A549 (cell line): ENCODE measurements at regions of chr19 and their contacts with region 1.

Region 1: GRCh38 chr19:45692187-45693105 is at the start of gene QPCTL:
- DNase-seq: peak; percentile 99 to 100
- ATAC-seq: peak; percentile 91 to 96
- H3K4me3 ChIP-seq: peak within 1 kb of the TSS; percentile 82
- H3K27ac ChIP-seq: peak within 1 kb of the TSS; percentile 88 to 91
- H3K4me1 ChIP-seq: peaks cover 13% of the 10 kb centered on the region
- CTCF ChIP-seq: no peak
- EP300 ChIP-seq: no peak
- POLR2A ChIP-seq: peak; percentile 93
- RAD21 ChIP-seq: no peak
- polyA plus RNA-seq, gene QPCTL: 9.4 and 10.3 TPM in 2 replicates

Region 2: DNA sequence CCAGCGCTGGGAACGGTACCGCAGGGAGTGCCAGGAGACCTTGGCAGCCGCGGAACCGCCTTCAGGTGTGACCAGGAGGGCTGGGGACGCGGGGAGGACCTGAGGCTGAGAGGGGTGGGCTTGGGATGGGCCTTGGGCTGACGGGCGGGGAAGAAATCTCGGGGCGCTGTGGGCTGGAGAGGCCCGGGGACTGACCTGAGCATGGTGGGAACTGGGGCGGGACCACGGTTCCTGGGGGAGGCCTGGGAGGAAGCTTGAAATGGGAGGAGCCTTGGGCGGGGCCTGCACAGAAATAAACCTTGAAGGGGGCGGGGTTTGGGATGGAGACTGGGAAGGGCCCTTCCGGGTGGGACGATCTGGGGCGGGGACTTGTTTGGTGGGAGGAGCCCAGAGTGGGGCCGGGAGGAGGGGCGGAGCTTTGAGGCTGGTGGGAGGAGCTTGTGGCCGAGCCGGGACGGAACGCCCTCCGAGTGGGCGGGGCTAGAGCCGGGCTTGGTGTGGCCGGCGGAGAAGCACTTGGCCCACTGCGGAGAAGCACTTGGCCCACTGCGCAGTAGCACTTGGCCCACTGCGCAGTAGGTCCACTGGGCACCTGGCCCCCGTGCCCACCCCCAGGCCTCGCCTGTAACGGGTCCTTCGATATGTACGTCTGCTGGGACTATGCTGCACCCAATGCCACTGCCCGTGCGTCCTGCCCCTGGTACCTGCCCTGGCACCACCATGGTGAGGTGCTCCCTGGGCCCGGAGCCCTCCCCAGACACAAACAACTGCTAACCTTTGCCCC is 21.6 kb before region 1 on chr19:
- CTCF ChIA-PET with region 1: interaction called, 159 read pairs
- POLR2A ChIA-PET with region 1: interaction called, 25 read pairs
- DNase-seq: peak; percentile 97
- ATAC-seq: peak; percentile 33 to 72
- H3K4me3 ChIP-seq: peak overlapping the region; percentile 39
- H3K27ac ChIP-seq: peak overlapping the region; percentile 60 to 76
- H3K4me1 ChIP-seq: peaks cover 27% of the 10 kb centered on the region
- CTCF ChIP-seq: no peak
- EP300 ChIP-seq: no peak
- POLR2A ChIP-seq: no peak
- RAD21 ChIP-seq: no peak

Region 3: GRCh38 chr19:45705115-45705514 is 12.7 kb after region 1 on chr19:
- CTCF ChIA-PET with region 1: interaction called, 160 read pairs
- POLR2A ChIA-PET with region 1: interaction called, 12 read pairs
- DNase-seq: no peak
- ATAC-seq: peak; percentile 19 to 35; a peak in 4 of 6 replicates
- H3K4me3 ChIP-seq: no peak overlapping the region
- H3K27ac ChIP-seq: no peak overlapping the region
- H3K4me1 ChIP-seq: no peaks in the 10 kb centered on the region
- CTCF ChIP-seq: no peak
- EP300 ChIP-seq: no peak
- POLR2A ChIP-seq: no peak
- RAD21 ChIP-seq: no peak

Region 4: DNA sequence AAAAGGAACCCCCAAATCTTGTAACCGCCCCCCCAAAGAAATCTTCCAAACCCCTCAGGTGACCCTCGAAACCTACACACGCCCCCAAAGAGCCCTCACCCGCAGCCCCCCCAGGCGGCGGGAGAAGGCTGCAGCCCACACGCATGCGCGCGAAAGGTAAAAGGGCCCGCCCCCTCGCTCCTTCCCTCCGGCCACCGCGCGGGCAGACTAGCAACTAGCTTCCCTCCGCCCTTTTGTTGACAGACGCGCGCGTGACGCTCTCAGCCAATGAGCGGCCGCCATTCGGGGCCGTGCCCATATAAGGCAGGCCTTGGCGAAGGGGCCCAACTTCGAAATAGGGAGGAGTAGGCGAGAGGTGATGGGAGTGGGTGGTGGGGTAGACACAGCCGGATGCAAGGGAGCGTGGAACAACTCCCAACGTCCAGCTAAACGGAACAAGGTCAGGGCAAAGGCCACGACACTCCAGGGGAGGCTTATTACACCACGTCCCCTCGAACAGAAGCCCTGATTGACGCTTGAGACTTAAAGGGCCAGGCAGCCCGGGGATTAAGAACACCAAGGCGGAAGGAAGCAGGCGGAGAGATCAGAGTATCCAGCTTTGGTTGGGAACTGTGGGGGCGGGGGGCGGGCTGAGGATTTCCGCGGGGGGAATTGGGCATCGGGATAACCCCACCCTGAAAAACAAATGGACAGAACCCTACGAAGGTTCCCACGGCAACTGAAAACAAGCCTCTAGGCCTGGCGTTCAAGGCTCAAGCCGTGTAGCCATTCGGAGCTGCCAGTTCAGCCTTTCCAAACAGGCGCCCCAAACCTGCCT is 24.9 kb after region 1 on chr19:
- CTCF ChIA-PET with region 1: interaction called, 160 read pairs
- POLR2A ChIA-PET with region 1: interaction called, 40 read pairs
- DNase-seq: peak; percentile 99 to 100
- ATAC-seq: peak; percentile 92 to 97
- H3K4me3 ChIP-seq: peak overlapping the region; percentile 80
- H3K27ac ChIP-seq: peak overlapping the region; percentile 92 to 96
- H3K4me1 ChIP-seq: peaks cover 39% of the 10 kb centered on the region
- CTCF ChIP-seq: no peak; the same call in 2 of the 3 replicates
- EP300 ChIP-seq: peak in 1 of 2 experiments; percentile 42; a peak in 1 of 5 replicates
- POLR2A ChIP-seq: peak; percentile 41
- RAD21 ChIP-seq: no peak

Region 5: DNA sequence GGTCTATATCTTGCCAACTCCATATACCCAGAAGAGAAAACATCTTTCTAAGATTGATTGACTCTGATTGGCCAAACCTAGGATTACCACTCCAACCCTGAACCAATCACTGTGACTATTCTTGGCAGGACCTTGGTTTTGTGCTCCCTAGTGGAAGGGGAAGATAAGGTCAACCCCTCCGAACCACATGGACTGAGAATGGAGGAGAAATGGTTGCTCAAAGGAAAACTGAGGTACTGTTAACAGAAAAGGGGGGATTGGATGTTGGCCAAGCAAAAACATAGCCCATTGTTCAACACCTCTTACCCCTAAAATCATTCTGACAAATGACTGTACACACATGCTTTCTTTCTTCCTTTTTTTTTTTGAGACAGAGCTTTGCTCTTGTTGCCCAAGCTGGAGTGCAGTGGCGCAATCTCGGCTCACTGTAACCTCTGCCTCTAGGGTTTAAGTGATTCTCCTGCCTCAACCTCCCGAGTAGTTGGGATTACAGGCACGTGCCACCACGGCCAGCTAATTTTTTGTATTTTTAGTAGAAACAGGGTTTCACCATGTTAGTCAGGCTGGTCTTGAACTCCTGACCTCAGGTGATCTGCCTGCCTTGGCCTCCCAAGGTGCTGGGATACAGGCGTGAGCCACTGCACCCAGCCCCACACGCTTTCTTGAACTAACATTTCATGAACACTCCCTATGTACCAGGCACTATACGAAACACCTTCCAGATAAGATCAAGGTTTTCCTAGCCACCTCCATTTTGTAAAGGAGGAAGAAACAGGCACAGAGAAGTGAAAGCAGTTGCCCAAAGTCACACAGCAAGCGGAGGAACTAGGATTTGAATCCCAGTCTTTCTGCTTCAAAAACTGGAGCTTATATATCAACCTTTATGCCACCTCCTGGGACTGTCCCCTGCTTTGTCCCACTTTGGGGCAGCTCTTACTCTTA is 47.3 kb after region 1 on chr19:
- CTCF ChIA-PET with region 1: interaction called, 15 read pairs
- POLR2A ChIA-PET with region 1: interaction called, 3 read pairs
- DNase-seq: peak in 1 of 2 experiments; percentile 55
- ATAC-seq: peak; percentile 48 to 64; a peak in 3 of 6 replicates
- H3K4me3 ChIP-seq: no peak overlapping the region
- H3K27ac ChIP-seq: no peak overlapping the region
- H3K4me1 ChIP-seq: peaks cover 7% of the 10 kb centered on the region; the same call in 1 of the 3 replicates
- CTCF ChIP-seq: no peak
- EP300 ChIP-seq: no peak
- POLR2A ChIP-seq: no peak
- RAD21 ChIP-seq: no peak

Region 6: DNA sequence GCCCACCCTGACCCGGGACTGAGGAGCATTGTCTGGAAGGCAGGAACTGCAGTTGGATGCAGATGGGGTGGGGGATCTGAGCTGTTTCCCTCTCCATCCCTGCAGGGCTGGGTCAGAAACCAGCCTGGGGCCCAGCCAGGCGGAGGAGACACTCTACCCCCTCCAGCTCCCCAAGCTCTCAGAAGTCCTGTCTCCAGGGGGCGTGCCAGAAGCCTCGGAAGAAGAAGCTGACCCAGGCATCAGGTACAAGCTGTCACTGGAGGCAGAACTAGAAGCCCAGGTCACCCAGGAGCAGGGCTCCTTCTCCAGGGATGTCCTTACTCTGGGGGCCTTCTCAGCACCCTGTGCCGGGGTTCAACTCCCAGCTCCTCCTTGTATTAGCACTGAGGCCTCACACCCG is 61.1 kb after region 1 on chr19:
- CTCF ChIA-PET with region 1: interaction called, 121 read pairs
- POLR2A ChIA-PET with region 1: interaction called, 3 read pairs
- DNase-seq: no peak
- ATAC-seq: peak; percentile 23 to 56; a peak in 3 of 6 replicates
- H3K4me3 ChIP-seq: no peak overlapping the region
- H3K27ac ChIP-seq: no peak overlapping the region
- H3K4me1 ChIP-seq: 0 out of 3 replicates have a peak, but pooled peaks cover 6% of the 10 kb centered on the region
- CTCF ChIP-seq: no peak
- EP300 ChIP-seq: no peak
- POLR2A ChIP-seq: no peak
- RAD21 ChIP-seq: no peak

Region 7: DNA sequence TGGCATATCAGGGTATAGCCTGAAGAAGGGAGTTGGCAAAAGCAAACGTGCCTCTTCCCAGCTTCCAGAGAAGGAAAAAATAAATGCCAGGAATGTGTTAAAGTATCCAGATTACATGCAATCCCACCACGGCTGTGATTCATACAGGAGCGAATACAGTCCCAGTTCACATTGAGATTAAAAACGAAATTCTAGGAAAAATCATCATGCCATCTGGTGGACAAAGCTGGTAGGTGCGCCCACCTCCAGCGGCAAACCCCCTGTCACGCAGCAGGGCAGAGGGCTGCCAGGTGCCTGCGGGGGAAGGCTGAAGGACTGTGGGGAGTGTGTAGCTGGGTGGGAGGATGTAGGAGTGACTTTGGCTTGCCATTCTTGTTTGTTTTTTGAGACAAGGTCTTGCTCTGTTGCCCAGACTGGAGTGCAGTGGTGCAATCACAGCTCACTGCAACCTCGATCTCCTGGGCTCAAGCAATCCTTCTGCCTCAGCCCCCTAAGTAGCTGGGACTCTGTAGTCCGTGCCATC is 106.6 kb after region 1 on chr19:
- CTCF ChIA-PET with region 1: interaction called, 21 read pairs
- POLR2A ChIA-PET with region 1: no interaction called
- DNase-seq: peak; percentile 68 to 94
- ATAC-seq: peak; percentile 85 to 94
- H3K4me3 ChIP-seq: no peak overlapping the region
- H3K27ac ChIP-seq: peak overlapping the region in 1 of 2 experiments; percentile 66; a peak in 2 of 6 replicates
- H3K4me1 ChIP-seq: peaks cover 18% of the 10 kb centered on the region
- CTCF ChIP-seq: peak; percentile 92
- EP300 ChIP-seq: no peak
- POLR2A ChIP-seq: no peak
- RAD21 ChIP-seq: peak; percentile 79